ENCODE measurements at regions of chr6 and their contacts with region 1.

Region 1: DNA sequence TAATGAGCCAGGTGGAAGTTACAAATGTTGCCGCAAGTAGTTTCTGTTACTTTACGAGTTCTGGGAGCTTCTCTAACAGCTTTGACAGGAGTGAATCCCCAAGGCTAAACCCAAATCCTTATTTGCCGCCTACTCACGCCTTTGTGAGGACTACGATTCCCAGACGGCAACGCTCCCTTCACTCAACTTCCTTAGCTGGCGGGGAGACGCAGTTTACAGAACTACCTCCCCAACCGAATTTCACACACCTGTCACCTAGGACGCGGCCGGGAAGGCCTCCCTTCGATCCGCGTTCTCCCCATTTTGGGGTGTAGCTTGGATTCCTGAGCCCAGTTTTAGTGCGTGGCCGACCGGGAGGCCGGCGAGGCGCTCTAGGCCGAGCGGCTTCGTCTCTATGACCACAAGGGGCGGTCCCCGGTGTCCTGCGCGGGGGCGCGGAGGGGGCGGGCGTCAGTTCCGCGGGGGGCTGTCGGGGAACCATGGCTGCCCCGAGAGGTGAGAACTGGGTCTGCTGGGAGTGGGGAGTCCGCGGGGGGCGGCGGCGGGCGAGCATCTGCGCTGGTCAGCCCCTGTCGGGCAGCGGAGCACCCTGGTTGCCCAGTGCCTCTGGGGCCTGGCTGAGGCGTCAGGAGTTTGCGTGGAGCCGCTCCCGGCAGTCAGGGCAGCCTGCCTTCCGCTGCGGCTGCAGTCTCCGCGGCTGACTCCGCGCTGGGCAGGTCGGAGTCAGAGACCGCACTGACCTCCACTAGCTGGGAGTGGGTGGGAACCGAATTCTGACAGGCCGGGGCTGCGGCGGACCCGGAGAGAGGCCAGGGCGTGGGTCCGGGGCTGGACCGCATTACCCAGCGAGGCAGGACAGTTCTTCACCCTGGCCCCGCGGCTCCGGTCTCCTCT is at the start of gene SLC35A1:
- DNase-seq: peak; percentile 79
- H3K4me3 Mint-ChIP-seq: peak within 1 kb of the TSS; percentile 88
- H3K27ac Mint-ChIP-seq: peak within 1 kb of the TSS; percentile 88
- H3K4me1 Mint-ChIP-seq: peaks cover 7% of the 10 kb centered on the region
- H3K27me3 Mint-ChIP-seq: peaks cover 8% of the 10 kb centered on the region
- total RNA-seq, gene SLC35A1: 10.5 and 11.1 TPM in 2 replicates

Region 2: DNA sequence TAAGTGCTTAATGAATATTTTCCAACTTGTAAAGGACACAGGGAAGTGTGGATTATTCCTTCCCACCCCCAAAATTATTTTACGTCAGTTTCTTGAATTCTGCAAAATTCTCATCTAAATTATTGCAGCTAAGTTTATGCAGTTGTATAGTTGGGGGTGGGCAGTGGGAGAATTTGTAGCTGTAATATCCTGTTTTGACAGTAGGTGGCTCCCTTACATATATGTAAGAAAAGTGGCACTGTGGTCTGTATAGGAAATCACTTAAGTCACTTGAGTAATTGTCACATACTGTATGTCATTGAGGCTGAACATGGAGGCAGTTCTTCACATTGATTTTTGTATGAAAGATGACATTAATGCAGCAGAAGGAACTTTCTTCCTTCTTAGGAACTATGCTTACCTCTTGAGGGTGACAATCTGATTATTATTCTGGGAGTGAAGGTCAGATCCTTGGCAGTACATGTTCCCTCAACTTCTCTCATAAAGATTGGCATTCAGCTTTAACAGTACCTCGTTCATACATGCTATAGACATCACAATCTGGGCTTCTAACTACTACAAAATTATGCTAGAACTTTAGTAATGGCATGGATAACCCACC is 79.7 kb before region 1 on chr6:
- intact Hi-C with region 1: loop called (anchors 5 kb)
- DNase-seq: no peak
- H3K4me3 Mint-ChIP-seq: no peak overlapping the region
- H3K27ac Mint-ChIP-seq: no peak overlapping the region
- H3K4me1 Mint-ChIP-seq: no peaks in the 10 kb centered on the region
- H3K27me3 Mint-ChIP-seq: no peaks in the 10 kb centered on the region

Region 3: GRCh38 chr6:87407901-87408720 is 64.7 kb before region 1 on chr6 and contains the start of gene CFAP206:
- intact Hi-C with region 1: loop called (anchors 1 kb)
- DNase-seq: peak; percentile 70
- H3K4me3 Mint-ChIP-seq: peak within 1 kb of the TSS; percentile 79
- H3K27ac Mint-ChIP-seq: no peak within 1 kb of the TSS
- H3K4me1 Mint-ChIP-seq: peaks cover 7% of the 10 kb centered on the region
- H3K27me3 Mint-ChIP-seq: peaks cover 29% of the 10 kb centered on the region
- total RNA-seq, gene CFAP206: not detected in 2 replicates

Region 4: GRCh38 chr6:87589693-87590549 is 117.1 kb after region 1 on chr6 and contains the starts of genes ORC3 and RARS2:
- intact Hi-C with region 1: loop called (anchors 1 kb)
- DNase-seq: peak; percentile 94
- H3K4me3 Mint-ChIP-seq: peak within 1 kb of the TSS; percentile 95
- H3K27ac Mint-ChIP-seq: peak within 1 kb of the TSS; percentile 89
- H3K4me1 Mint-ChIP-seq: peaks cover 39% of the 10 kb centered on the region
- H3K27me3 Mint-ChIP-seq: no peaks in the 10 kb centered on the region
- total RNA-seq, gene ORC3: 31.2 and 31.9 TPM in 2 replicates
- total RNA-seq, gene RARS2: 23.3 and 23.5 TPM in 2 replicates

Measured in activated T-helper 2 cell treated with anti-CD3 and anti-CD28 coated beads, Interferon-gamma antibody, Interleukin-2, Interleukin-4, amounts not matched to agents 10 μg/mL and 5 μg/mL and 100 μg/mL, durations not matched to agents 14 hours and 24 hours and 36 hours (primary cell).